AG04449 (cell line): ENCODE measurements at regions of chr14 and their contacts with region 1.

Region 1: GRCh38 chr14:21039585-21040369 is 2.4 kb upstream of the RNASE7 start:
- DNase-seq: peak; percentile 29
- H3K4me3 ChIP-seq: no peak overlapping the region
- CTCF ChIP-seq: peak; percentile 56

Region 2: DNA sequence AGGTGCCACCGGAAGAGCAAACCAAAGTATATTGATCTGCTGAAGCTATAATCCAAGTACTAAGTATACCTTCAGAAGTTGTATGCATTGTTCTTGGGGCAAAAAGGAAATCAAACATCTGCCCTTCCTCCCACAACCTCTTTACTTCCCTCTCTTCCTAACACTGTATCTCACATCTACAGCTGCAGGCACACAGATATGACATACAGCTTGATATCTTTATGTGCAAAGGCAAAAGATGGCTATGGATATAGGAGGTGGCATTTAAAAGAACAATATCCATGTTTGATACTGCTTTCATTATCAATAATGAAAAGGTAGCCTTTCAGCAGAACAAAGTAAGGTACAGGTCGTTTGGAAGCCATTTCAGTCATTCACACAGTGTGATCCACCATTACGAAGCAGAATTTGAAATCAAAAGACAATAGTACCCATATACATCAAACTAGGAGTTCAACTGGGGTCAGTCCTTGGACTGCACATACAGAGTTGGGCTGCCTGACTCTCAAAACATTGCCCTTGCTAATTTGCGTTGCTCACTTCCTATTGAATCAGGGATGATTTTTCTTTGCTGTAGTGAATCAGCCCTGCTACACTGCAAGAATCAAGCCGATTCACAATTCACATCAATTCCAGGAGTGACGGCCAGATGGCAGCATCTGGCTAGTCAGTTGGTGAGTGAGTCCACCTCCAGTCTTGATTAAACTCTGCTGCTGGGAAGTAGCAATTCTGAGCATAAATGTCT is 342.3 kb before region 1 on chr14:
- CTCF ChIA-PET with region 1: interaction called, 21 read pairs
- POLR2A ChIA-PET with region 1: no interaction called
- DNase-seq: no peak
- H3K4me3 ChIP-seq: no peak overlapping the region
- CTCF ChIP-seq: peak; percentile 81

Region 3: GRCh38 chr14:21003788-21004346 is 35.9 kb before region 1 on chr14:
- CTCF ChIA-PET with region 1: interaction called, 287 read pairs
- POLR2A ChIA-PET with region 1: no interaction called
- DNase-seq: no peak
- H3K4me3 ChIP-seq: no peak overlapping the region
- CTCF ChIP-seq: no peak

Region 4: GRCh38 chr14:21024585-21025370 is 15.0 kb before region 1 on chr14 and contains the start of gene NDRG2:
- CTCF ChIA-PET with region 1: interaction called, 287 read pairs
- POLR2A ChIA-PET with region 1: no interaction called
- DNase-seq: no peak
- H3K4me3 ChIP-seq: peak within 1 kb of the TSS; percentile 43
- CTCF ChIP-seq: no peak

Region 5: GRCh38 chr14:21057803-21058675 is 18.3 kb after region 1 on chr14 and contains the start of gene RNASE8:
- CTCF ChIA-PET with region 1: interaction called, 23 read pairs
- POLR2A ChIA-PET with region 1: no interaction called
- DNase-seq: no peak
- H3K4me3 ChIP-seq: no peak within 1 kb of the TSS
- CTCF ChIP-seq: peak; percentile 36